ENCODE measurements at regions of chr15 and their contacts with region 1.

Region 1: GRCh38 chr15:60520825-60521368 is 42.0 kb upstream of the ICE2 start:
- DNase-seq: peak; percentile 54
- H3K4me3 ChIP-seq: peak overlapping the region in 1 of 2 experiments; percentile 35; a peak in 1 of 4 replicates
- H3K27ac ChIP-seq: no peak overlapping the region
- H3K4me1 ChIP-seq: peaks cover 1 to 16% of the 10 kb centered on the region in 2 experiments; a peak in 3 of 4 replicates
- H3K27me3 ChIP-seq: no peaks in the 10 kb centered on the region
- CTCF ChIP-seq: peak; percentile 97
- EP300 ChIP-seq: no peak
- RAD21 ChIP-seq: peak; percentile 93

Region 2: DNA sequence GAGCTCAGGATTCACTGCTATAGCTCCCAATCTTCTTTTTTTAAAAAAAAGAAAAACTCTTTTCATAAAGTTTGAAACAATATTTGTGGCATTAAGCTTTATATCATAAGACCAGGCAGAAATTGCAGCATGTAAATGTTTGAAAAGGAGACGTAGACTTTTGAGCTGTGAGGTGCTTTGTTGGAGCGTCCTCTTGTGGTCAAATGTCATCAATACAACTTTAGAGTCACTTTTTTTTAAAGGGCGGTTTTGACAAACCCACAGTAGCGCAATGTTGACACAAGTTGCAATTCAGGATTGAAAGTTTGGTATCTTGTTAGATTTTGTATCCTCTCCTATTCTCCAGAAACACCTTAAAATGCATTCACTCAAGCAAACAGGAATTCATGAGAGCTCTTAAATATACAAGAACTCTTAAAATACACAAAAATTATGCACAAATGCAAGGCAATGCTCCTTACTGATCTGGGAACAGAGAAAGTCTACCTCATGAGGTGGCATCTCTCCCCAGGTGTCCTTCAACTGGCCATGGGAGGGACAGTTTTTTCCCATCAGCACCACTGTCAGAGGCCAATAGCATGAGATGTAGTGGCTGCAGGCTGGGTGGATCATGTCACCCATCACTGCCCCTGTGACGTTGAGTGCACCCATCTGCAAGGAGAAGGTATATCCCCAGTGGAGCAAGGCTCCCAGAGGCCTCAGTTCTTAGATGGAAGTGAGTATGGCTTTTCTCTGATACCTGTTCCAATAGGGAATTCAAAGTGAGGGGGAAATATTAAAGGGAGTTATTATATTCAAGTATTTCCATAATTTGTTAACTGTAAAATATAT is 193.9 kb before region 1 on chr15:
- CTCF ChIA-PET with region 1: interaction called, 52 read pairs
- POLR2A ChIA-PET with region 1: no interaction called
- DNase-seq: peak; percentile 40
- H3K4me3 ChIP-seq: no peak overlapping the region; a peak in 1 of 4 replicates
- H3K27ac ChIP-seq: no peak overlapping the region
- H3K4me1 ChIP-seq: peaks cover 0 to 9% of the 10 kb centered on the region in 2 experiments; a peak in 2 of 4 replicates
- H3K27me3 ChIP-seq: peaks cover 28% of the 10 kb centered on the region; the same call in 1 of the 2 replicates
- CTCF ChIP-seq: peak; percentile 95
- EP300 ChIP-seq: no peak
- RAD21 ChIP-seq: peak; percentile 96

Region 3: GRCh38 chr15:60444289-60444912 is 76.5 kb before region 1 on chr15:
- CTCF ChIA-PET with region 1: interaction called, 10 read pairs
- POLR2A ChIA-PET with region 1: no interaction called
- DNase-seq: peak; percentile 10
- H3K4me3 ChIP-seq: no peak overlapping the region
- H3K27ac ChIP-seq: peak overlapping the region in 1 of 2 experiments; percentile 19; a peak in 1 of 4 replicates
- H3K4me1 ChIP-seq: peaks cover 5 to 6% of the 10 kb centered on the region in 2 experiments; a peak in 3 of 4 replicates
- H3K27me3 ChIP-seq: no peaks in the 10 kb centered on the region
- CTCF ChIP-seq: peak; percentile 82
- EP300 ChIP-seq: no peak
- RAD21 ChIP-seq: peak; percentile 68

Region 4: GRCh38 chr15:60485365-60486055 is 35.4 kb before region 1 on chr15:
- CTCF ChIA-PET with region 1: interaction called, 11 read pairs
- POLR2A ChIA-PET with region 1: no interaction called
- DNase-seq: no peak
- H3K4me3 ChIP-seq: no peak overlapping the region
- H3K27ac ChIP-seq: no peak overlapping the region; a peak in 1 of 4 replicates
- H3K4me1 ChIP-seq: peaks cover 0 to 6% of the 10 kb centered on the region in 2 experiments; a peak in 2 of 4 replicates
- H3K27me3 ChIP-seq: no peaks in the 10 kb centered on the region
- CTCF ChIP-seq: no peak
- EP300 ChIP-seq: no peak
- RAD21 ChIP-seq: no peak

Region 5: GRCh38 chr15:60507596-60508424 is 13.1 kb before region 1 on chr15:
- CTCF ChIA-PET with region 1: interaction called, 99 read pairs
- POLR2A ChIA-PET with region 1: no interaction called
- DNase-seq: peak; percentile 60
- H3K4me3 ChIP-seq: no peak overlapping the region; a peak in 1 of 4 replicates
- H3K27ac ChIP-seq: no peak overlapping the region
- H3K4me1 ChIP-seq: peaks cover 0 to 2% of the 10 kb centered on the region in 2 experiments; a peak in 2 of 4 replicates
- H3K27me3 ChIP-seq: no peaks in the 10 kb centered on the region
- CTCF ChIP-seq: peak; percentile 96
- EP300 ChIP-seq: no peak
- RAD21 ChIP-seq: peak; percentile 86

Region 6: GRCh38 chr15:60585743-60586708 is 65.1 kb after region 1 on chr15:
- CTCF ChIA-PET with region 1: interaction called, 12 read pairs
- POLR2A ChIA-PET with region 1: no interaction called
- DNase-seq: peak; percentile 66
- H3K4me3 ChIP-seq: no peak overlapping the region; a peak in 1 of 4 replicates
- H3K27ac ChIP-seq: no peak overlapping the region
- H3K4me1 ChIP-seq: peaks cover 0 to 3% of the 10 kb centered on the region in 2 experiments; a peak in 3 of 4 replicates
- H3K27me3 ChIP-seq: no peaks in the 10 kb centered on the region
- CTCF ChIP-seq: peak; percentile 98
- EP300 ChIP-seq: no peak
- RAD21 ChIP-seq: peak; percentile 97

Region 7: GRCh38 chr15:60601098-60601497 is 80.2 kb after region 1 on chr15:
- CTCF ChIA-PET with region 1: no interaction called
- POLR2A ChIA-PET with region 1: no interaction called
- DNase-seq: no peak
- H3K4me3 ChIP-seq: no peak overlapping the region
- H3K27ac ChIP-seq: no peak overlapping the region
- H3K4me1 ChIP-seq: peaks cover under 1 to 6% of the 10 kb centered on the region in 2 experiments; a peak in 2 of 4 replicates
- H3K27me3 ChIP-seq: no peaks in the 10 kb centered on the region; the same call in 1 of the 2 replicates
- CTCF ChIP-seq: no peak
- EP300 ChIP-seq: no peak
- RAD21 ChIP-seq: no peak